ENCODE measurements at regions of chr6 and their contacts with region 1.

Region 1: GRCh38 chr6:119110601-119111548 is 32.4 kb upstream of the FAM184A start:
- DNase-seq: peak; percentile 32
- H3K4me3 Mint-ChIP-seq: no peak overlapping the region
- H3K27ac Mint-ChIP-seq: no peak overlapping the region
- H3K4me1 Mint-ChIP-seq: peaks cover 9% of the 10 kb centered on the region
- H3K27me3 Mint-ChIP-seq: no peaks in the 10 kb centered on the region

Region 2: GRCh38 chr6:118168421-118168820 is 942.5 kb before region 1 on chr6:
- CTCF ChIA-PET with region 1: no interaction called
- POLR2A ChIA-PET with region 1: no interaction called
- intact Hi-C with region 1: no loop called
- DNase-seq: no peak
- H3K4me3 Mint-ChIP-seq: no peak overlapping the region
- H3K27ac Mint-ChIP-seq: no peak overlapping the region
- H3K4me1 Mint-ChIP-seq: no peaks in the 10 kb centered on the region
- H3K27me3 Mint-ChIP-seq: no peaks in the 10 kb centered on the region

Region 3: DNA sequence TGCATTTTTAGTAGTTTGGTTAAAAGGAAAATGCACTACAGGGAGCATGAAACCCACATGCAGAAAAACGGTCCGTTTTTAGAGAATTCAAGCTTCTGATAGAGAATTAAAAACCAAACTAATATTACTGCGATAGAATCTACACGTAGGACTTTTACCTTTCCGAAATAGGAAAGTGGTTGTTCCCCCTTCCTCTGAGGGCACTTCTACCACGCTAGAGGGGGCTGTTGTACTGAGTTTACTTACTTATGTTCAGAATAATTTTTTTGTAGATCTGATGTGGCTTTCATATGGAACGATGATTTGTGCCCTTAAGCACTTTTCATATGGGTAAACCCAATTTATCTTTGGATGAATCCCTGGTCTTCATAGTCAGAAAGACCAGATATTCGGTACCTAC is 827.1 kb before region 1 on chr6:
- CTCF ChIA-PET with region 1: interaction called, 4 read pairs
- POLR2A ChIA-PET with region 1: no interaction called
- intact Hi-C with region 1: loop called (anchors 5 kb)
- DNase-seq: peak; percentile 39
- H3K4me3 Mint-ChIP-seq: no peak overlapping the region
- H3K27ac Mint-ChIP-seq: no peak overlapping the region
- H3K4me1 Mint-ChIP-seq: no peaks in the 10 kb centered on the region
- H3K27me3 Mint-ChIP-seq: no peaks in the 10 kb centered on the region

Region 4: DNA sequence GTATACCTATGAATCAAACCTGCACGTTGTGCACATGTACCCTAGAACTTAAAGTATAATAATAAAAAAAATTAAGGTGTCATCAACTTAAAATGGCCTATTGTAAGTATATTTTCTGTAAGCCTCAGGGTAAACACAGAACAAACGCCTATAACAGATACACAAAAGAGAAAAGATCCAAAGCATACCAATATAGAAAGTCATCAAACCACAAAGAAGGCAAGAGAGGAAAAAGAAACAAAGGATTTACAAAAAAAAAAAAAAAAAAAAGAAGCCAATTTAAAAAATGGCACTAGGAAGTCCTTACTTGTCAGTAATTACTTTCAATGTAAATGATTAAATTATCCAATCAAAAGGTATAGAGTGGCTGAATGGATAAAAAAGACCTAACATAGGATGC is 241.5 kb before region 1 on chr6:
- CTCF ChIA-PET with region 1: no interaction called
- POLR2A ChIA-PET with region 1: no interaction called
- intact Hi-C with region 1: no loop called
- DNase-seq: no peak
- H3K4me3 Mint-ChIP-seq: no peak overlapping the region
- H3K27ac Mint-ChIP-seq: no peak overlapping the region
- H3K4me1 Mint-ChIP-seq: peaks cover 44% of the 10 kb centered on the region
- H3K27me3 Mint-ChIP-seq: no peaks in the 10 kb centered on the region

Region 5: DNA sequence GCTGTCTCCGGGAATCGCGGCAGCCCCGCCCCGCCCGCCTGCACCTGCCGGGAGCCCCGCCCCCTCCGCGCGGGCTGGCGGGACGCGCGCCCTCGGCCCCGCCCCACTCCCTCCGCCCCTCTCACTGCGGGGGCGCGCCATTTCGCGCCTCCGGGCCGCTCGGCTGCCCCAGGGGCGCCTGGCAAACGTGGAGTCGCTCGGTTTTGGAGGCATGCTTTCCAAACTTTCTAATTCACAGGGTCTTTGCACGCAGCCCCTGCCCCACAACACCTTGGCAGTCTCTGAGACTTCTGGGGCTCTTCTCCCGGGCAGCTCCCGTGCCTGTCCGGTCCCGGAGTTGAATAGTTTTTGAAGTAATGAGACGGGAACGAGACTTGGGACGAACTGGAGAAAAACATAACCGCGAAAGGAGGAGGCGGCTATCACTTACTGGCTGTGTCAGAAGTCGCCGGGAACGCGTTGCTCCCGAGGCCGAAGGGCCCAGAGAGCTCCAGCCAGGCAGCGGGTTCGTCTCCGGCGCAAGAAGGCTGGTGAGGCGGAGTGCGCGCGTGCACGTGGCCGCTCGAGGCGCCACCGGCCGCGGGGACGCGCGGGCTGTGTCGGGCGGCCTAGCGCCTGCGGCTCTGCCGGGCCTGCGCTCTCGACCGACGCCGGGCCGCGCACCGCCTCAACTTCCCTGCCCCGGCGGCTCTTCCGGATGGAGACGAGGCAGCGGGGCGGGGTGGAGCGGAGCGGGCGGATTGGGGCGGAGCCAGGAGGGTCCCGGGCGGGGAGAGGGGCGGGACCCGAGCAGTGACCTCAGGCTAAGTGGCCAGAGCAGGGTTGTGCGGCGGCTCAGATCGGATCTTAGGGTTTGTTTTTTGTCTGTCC is 176.2 kb before region 1 on chr6 and contains the start of gene MCM9:
- CTCF ChIA-PET with region 1: interaction called, 12 read pairs
- POLR2A ChIA-PET with region 1: no interaction called
- intact Hi-C with region 1: no loop called
- DNase-seq: peak; percentile 94
- H3K4me3 Mint-ChIP-seq: peak within 1 kb of the TSS; percentile 81
- H3K27ac Mint-ChIP-seq: peak within 1 kb of the TSS; percentile 92
- H3K4me1 Mint-ChIP-seq: peaks cover 23% of the 10 kb centered on the region
- H3K27me3 Mint-ChIP-seq: no peaks in the 10 kb centered on the region
- total RNA-seq, gene MCM9: 14.4 to 14.7 TPM

Region 6: DNA sequence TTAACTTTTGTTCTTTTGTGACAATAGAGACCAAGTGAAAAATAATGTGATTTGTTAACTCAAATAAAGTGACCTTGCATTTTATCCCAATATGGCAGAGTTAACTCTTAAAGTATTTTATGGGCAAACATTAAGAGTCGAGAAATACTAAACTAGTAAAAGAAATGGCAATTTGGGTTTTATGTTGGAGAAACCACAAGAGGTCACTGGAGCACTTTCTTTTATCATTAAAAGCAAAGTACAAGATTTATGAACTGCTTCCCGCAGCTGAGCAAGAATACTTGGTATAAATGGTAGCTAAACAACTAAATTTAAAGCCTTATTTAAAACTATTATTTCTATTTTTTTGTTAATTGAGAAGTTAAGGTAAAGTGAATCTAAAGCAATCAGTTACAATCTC is 142.5 kb before region 1 on chr6:
- CTCF ChIA-PET with region 1: interaction called, 200 read pairs
- POLR2A ChIA-PET with region 1: no interaction called
- intact Hi-C with region 1: loop called (anchors 1 kb)
- DNase-seq: no peak
- H3K4me3 Mint-ChIP-seq: no peak overlapping the region
- H3K27ac Mint-ChIP-seq: no peak overlapping the region
- H3K4me1 Mint-ChIP-seq: no peaks in the 10 kb centered on the region
- H3K27me3 Mint-ChIP-seq: no peaks in the 10 kb centered on the region

Region 7: DNA sequence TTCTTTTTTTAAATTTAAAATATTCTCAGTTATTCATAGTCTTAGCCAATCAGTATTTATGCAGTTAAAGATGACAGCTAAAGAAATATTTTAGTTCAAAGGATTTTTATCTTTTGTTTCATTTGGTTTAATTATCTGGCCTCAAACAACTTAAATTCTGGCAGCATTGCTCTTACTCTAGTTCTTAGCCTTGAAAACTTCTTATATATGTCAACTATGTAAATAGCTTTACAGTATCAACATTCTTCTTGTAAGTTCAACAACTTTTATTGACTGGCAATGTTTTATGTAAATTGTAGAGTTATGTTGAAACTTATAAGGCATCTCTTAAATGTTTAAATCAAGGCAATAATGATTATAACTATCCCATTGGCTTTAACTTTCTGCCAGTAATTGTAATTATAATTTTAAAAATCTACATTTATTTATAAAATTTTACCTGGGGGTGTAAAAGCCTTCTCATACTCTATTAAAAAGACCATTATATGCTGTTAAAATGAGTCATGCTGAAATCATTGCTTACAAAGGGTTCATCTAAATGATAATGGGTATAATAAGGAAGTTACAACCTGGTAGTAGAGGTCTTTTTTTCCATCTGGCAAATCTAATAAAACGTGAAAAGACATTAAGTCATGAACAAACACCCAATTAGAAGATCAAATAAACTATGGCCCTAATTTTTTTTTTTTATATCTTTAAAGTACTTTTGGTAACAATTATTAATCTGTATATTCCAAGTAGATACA is 13.4 kb after region 1 on chr6:
- CTCF ChIA-PET with region 1: interaction called, 12 read pairs
- POLR2A ChIA-PET with region 1: no interaction called
- intact Hi-C with region 1: no loop called
- DNase-seq: no peak
- H3K4me3 Mint-ChIP-seq: no peak overlapping the region
- H3K27ac Mint-ChIP-seq: no peak overlapping the region
- H3K4me1 Mint-ChIP-seq: no peaks in the 10 kb centered on the region
- H3K27me3 Mint-ChIP-seq: peaks cover 1% of the 10 kb centered on the region

Measured in activated CD4-positive, alpha-beta memory T cell treated with anti-CD3 and anti-CD28 coated beads for 36 hours (primary cell).